OCI-LY7 (cell line): ENCODE measurements at regions of chr16 and their contacts with region 1.

Region 1: GRCh38 chr16:29862884-29863668 is at the start of gene CDIPT:
- DNase-seq: peak; percentile 99
- H3K4me3 ChIP-seq: peak within 1 kb of the TSS; percentile 91
- H3K27ac ChIP-seq: peak within 1 kb of the TSS; percentile 45
- H3K4me1 ChIP-seq: peaks cover 15% of the 10 kb centered on the region
- CTCF ChIP-seq: peak; percentile 78
- total RNA-seq, gene CDIPT: 39.6 and 52.4 TPM in 2 replicates

Region 2: GRCh38 chr16:29995911-29996772 is 133.1 kb after region 1 on chr16 and contains the start of gene INO80E:
- CTCF ChIA-PET with region 1: no interaction called
- POLR2A ChIA-PET with region 1: no interaction called
- intact Hi-C with region 1: loop called (anchors 1 kb)
- DNase-seq: peak; percentile 99
- H3K4me3 ChIP-seq: peak within 1 kb of the TSS; percentile 85
- H3K27ac ChIP-seq: peak within 1 kb of the TSS; percentile 90
- H3K4me1 ChIP-seq: peaks cover 27% of the 10 kb centered on the region
- CTCF ChIP-seq: no peak
- total RNA-seq, gene INO80E: 88.0 and 94.7 TPM in 2 replicates